Motor neuron (in vitro differentiated cells): ENCODE measurements at regions of chr5 and their contacts with region 1.

Region 1: DNA sequence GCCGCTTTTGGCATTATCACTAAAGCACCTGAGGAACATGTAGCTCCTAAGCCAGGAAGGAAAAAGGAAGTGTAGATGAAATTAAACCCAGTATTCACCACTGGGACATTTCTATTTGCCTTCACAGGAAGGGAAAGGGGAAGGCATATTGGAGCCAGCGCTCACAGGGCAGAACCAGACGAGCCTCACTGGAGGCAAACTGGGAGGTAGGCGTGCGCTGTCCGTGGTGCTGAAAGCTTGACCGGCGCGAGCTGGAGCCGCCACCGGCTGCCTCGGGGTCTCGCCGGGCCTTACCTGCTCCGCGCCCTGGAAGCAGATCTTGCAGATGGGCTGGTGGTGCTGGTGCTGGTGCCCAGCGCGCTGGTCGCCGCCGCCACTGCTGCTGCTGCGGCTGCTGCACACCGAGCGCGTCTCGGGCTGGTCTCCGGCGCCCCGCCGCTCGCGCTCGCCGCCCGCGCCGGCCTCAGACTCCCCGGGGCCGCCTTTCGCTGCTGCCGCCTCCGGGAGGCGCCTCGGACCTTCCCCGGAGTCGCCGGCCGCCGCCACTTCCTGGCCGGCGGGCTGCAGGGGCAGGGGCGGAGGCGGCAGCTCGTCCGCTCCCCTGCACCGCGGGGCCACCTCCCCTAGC is 732 bp downstream of the MARCHF11 start:
- ATAC-seq: peak; percentile 74 to 98 (median 80)
- H3K4me3 ChIP-seq: peak overlapping the region; percentile 45 to 69 (median 54)
- H3K27ac ChIP-seq: peak overlapping the region; percentile 3 to 22
- H3K4me1 ChIP-seq: peaks cover 0 to 7% of the 10 kb centered on the region in 2 donors

Region 2: DNA sequence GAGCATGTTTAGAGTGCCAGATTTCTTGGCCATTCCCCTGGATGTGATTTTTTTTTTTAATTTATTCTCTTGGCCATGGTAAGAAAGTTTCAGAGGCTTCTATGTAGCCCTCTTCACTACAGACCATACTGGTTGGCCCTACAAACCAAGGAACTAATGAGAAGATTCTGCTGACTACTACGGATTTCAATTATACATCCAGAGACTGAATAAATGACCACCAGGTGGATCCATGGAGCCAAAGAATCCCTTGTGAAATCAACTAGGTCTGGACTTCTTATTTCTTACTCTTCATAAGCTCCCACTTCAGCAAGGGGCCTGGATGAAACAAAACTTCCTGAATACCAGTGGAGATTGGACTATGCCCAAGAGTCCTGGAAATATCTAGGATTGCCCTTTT is 259.1 kb after region 1 on chr5:
- in situ Hi-C with region 1: loop called in 3 of 9 experiments (anchors 25 kb)
- ATAC-seq: no peak
- H3K4me3 ChIP-seq: no peak overlapping the region
- H3K27ac ChIP-seq: no peak overlapping the region
- H3K4me1 ChIP-seq: peaks cover 2 to 7% of the 10 kb centered on the region in 2 donors

Region 3: DNA sequence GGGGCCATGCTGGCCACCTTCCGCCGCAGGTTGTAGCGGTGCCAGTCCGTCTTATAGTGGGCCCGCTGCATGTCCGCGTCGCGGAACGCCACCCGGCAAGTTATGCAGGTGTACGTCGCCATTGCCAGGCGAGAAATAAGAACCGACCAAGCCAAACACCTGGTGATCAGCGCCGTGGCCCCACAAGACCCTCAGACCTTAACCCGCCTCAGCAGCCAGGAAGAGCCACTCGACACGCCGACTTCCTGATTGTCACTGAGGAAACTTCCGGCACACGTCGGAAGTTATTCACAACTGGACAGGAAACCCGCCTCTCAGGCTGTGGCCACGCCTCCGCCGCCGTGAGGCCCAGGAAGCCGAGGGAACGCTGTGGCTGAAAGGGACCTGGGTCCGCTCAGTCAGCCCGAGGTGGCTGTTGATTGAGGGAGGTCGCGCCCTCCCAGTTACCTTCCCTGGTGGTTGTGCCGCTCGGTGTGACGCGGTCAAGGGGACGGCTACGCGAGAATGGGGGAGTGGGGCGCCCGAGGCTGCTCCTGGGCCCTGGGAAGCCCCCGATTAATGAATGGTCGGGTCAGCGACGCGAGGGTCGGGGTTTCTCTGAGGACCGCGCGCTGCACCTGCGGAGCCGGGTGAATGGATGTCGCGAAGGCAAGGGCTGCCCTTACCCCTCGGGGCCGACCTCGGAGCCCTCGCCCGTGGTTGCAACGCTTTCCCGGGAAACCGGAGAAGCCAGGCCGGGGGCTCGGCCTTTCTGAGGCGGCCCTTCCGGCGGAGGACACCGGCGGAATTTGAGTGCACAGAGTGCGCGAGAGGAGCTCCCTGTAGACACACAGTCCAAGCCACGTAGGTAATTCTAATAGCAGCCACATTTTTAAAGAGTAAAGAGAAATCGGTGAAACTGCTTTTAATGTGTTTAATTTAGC is 286.9 kb after region 1 on chr5 and contains the start of gene ZNF622:
- in situ Hi-C with region 1: loop called in 5 of 9 experiments (anchors 25 kb)
- ATAC-seq: peak; percentile 86 to 97 (median 96)
- H3K4me3 ChIP-seq: peak within 1 kb of the TSS; percentile 69 to 75 (median 72)
- H3K27ac ChIP-seq: peak within 1 kb of the TSS; percentile 77 to 86
- H3K4me1 ChIP-seq: peaks cover 16 to 40% of the 10 kb centered on the region in 2 donors
- total RNA-seq, gene ZNF622: 27.6 to 63.3 (median 53.9) TPM